Right ventricle myocardium superior (tissue), 1 donor: ENCODE measurements at regions of chrX and their contacts with region 1.

Region 1: DNA sequence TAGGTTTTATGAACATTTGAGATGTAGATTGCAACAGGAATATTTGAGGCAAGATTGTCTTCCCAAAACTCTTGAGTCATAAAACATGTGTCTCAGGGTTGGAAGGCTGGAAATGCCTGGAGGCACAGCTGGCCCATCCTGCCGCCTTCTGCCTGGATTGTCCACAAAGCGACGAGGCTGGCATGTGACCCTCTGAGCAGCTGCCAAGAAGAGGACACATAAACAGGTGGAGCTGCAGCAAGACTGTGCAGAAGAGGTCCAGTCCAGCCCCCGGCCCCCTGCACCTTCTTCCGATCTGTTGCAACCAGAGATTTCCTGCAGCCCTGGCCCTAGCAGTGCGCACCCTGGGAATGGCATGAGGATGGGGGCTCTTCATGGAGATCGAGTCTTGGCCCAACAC is 101.9 kb upstream of the BCOR start:
- DNase-seq: no peak
- ATAC-seq: no peak

Region 2: GRCh38 chrX:39149761-39150160 is 1049.9 kb before region 1 on chrX:
- intact Hi-C with region 1: no loop called
- DNase-seq: peak; percentile 88
- ATAC-seq: peak; percentile 78

Region 3: DNA sequence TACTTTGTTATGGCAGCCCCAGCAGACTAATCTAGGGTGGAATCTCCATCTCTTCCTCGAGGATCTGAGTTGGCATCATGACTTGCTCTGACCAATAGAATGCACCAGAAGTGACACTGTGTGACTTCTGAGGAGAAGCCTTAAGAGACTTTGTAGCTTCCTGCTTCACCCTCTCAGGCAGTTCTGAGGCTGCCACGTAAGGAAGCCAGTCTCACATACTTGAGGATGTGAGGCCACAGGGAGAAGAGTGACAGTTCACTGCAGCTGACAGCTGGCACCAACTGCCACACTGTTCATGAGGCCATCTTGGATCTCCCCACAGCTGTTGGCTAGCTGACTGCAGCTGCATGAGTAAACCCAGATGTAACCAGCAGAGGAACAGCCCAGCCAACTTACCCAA is 72.7 kb before region 1 on chrX:
- intact Hi-C with region 1: no loop called
- DNase-seq: no peak
- ATAC-seq: no peak

Region 4: DNA sequence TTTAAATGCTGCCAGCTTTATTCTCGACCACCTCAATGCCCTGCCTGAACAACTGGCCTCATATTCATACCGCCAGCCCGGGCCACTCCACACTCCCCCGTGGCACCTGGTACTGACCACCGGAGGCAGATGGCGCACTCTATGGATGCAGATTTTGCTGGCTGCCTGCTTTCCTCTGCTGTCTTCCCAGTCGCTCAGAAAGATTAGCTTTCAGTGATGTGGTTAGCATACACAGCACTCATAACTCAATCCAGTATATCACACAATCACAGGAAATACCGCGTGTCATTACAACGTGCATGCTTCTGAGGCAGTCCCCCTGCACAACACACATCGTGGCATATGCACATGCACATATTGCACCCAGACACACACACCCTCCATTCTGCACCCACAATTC is 45.3 kb after region 1 on chrX:
- intact Hi-C with region 1: loop called (anchors 10 kb)
- DNase-seq: no peak
- ATAC-seq: no peak

Region 5: GRCh38 chrX:40343319-40343718 is 143.6 kb after region 1 on chrX:
- intact Hi-C with region 1: no loop called
- DNase-seq: no peak
- ATAC-seq: no peak